Sigmoid colon (tissue), 7 donors: ENCODE measurements at regions of chr14 and their contacts with region 1.

Region 1: DNA sequence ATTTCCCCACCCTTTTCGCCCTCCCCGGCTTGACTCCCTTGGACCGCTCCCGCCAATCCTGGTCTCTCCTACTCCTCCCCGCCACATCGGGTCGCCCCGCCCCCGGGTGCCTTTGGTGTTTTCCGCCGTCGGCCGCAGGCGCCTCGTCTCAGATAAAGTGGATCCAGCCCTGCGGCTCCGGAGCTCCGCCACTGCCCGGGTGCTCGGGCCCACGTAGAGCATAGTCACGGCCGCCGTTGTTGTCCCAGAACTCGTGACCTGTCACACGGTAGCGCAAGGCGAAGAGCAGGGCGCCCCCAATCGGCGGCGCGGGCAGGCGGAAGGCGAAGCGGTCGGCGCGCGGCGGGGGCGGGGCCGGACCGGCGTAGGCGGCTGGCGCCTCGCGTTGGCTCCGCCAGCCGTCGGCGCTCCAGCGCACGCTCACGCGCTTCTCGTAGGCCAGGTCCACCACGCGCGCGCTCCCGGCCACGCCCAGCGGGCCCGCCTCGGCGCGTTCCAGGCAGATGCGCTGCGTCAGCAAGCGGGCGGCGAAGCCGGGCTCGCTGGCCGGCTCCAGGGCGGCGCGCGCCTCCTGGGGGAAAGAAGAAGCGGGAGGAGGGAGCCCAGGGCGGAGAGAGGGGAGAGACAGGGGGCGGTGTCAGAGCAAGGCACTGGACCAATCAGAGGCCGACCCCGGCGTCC is 1.2 kb downstream of the PPP1R3E start:
- DNase-seq: peak; percentile 99
- H3K4me3 ChIP-seq: peak overlapping the region; percentile 56 to 94 (median 71)
- H3K27ac ChIP-seq: peak overlapping the region; percentile 92 to 100 (median 100)
- H3K4me1 ChIP-seq: peaks cover 0 to 32% (median 28%) of the 10 kb centered on the region in 4 donors
- H3K27me3 ChIP-seq: no peaks in the 10 kb centered on the region
- CTCF ChIP-seq: peak; percentile 36 to 63 (median 54)
- EP300 ChIP-seq: peak in 2 of 4 donors; percentile 42 to 68
- POLR2A ChIP-seq: peak; percentile 42 to 55

Region 2: GRCh38 chr14:22929104-22929847 is 372.2 kb before region 1 on chr14 and contains the start of gene PRMT5:
- intact Hi-C with region 1: loop called (anchors 10 kb)
- DNase-seq: peak; percentile 100
- H3K4me3 ChIP-seq: peak within 1 kb of the TSS; percentile 75 to 91 (median 83)
- H3K27ac ChIP-seq: peak within 1 kb of the TSS; percentile 87 to 97 (median 94)
- H3K4me1 ChIP-seq: peaks cover 0 to 21% (median 16%) of the 10 kb centered on the region in 4 donors
- H3K27me3 ChIP-seq: no peaks in the 10 kb centered on the region
- CTCF ChIP-seq: no peak
- EP300 ChIP-seq: no peak
- POLR2A ChIP-seq: peak; percentile 74 to 84
- total RNA-seq, gene PRMT5: 33.3 to 61.7 (median 44.7) TPM

Region 3: GRCh38 chr14:23095196-23096108 is 206.0 kb before region 1 on chr14 and contains the start of gene C14orf119:
- intact Hi-C with region 1: loop called (anchors 10 kb)
- DNase-seq: peak; percentile 100
- H3K4me3 ChIP-seq: peak within 1 kb of the TSS; percentile 79 to 93 (median 90)
- H3K27ac ChIP-seq: peak within 1 kb of the TSS; percentile 97 to 99 (median 98)
- H3K4me1 ChIP-seq: peaks cover 0 to 49% (median 38%) of the 10 kb centered on the region in 4 donors
- H3K27me3 ChIP-seq: no peaks in the 10 kb centered on the region
- CTCF ChIP-seq: no peak
- EP300 ChIP-seq: peak in 1 of 4 donors; percentile 56
- POLR2A ChIP-seq: peak; percentile 86
- total RNA-seq, gene C14orf119: 22.4 to 38.9 (median 30.1) TPM

Region 4: GRCh38 chr14:23269193-23269592 is 32.2 kb before region 1 on chr14:
- intact Hi-C with region 1: loop called (anchors 1 kb)
- DNase-seq: no peak
- H3K4me3 ChIP-seq: no peak overlapping the region
- H3K27ac ChIP-seq: no peak overlapping the region
- H3K4me1 ChIP-seq: no peaks in the 10 kb centered on the region
- H3K27me3 ChIP-seq: no peaks in the 10 kb centered on the region
- CTCF ChIP-seq: no peak
- EP300 ChIP-seq: no peak
- POLR2A ChIP-seq: no peak

Region 5: GRCh38 chr14:23286020-23286905 is 15.2 kb before region 1 on chr14 and contains the start of gene HOMEZ:
- intact Hi-C with region 1: loop called (anchors 2 kb)
- DNase-seq: peak; percentile 100
- H3K4me3 ChIP-seq: peak within 1 kb of the TSS; percentile 73 to 99 (median 78)
- H3K27ac ChIP-seq: peak within 1 kb of the TSS; percentile 91 to 100 (median 96)
- H3K4me1 ChIP-seq: peaks cover 0 to 25% (median 20%) of the 10 kb centered on the region in 4 donors
- H3K27me3 ChIP-seq: no peaks in the 10 kb centered on the region
- CTCF ChIP-seq: no peak
- EP300 ChIP-seq: no peak
- POLR2A ChIP-seq: peak; percentile 51 to 62
- total RNA-seq, gene HOMEZ: 5.4 to 10.5 (median 6.1) TPM

Region 6: GRCh38 chr14:24141097-24141880 is 839.9 kb after region 1 on chr14 and contains the start of gene EMC9:
- intact Hi-C with region 1: loop called (anchors 10 kb)
- DNase-seq: peak; percentile 100
- H3K4me3 ChIP-seq: peak within 1 kb of the TSS; percentile 73 to 91 (median 81)
- H3K27ac ChIP-seq: peak within 1 kb of the TSS; percentile 92 to 98 (median 96)
- H3K4me1 ChIP-seq: peaks cover 0 to 61% (median 51%) of the 10 kb centered on the region in 4 donors
- H3K27me3 ChIP-seq: no peaks in the 10 kb centered on the region
- CTCF ChIP-seq: peak; percentile 36 to 75 (median 64)
- EP300 ChIP-seq: no peak
- POLR2A ChIP-seq: peak; percentile 83 to 88
- total RNA-seq, gene EMC9: 5.0 to 20.9 (median 12.9) TPM